Sciatic nerve (tissue), 2 donors: ENCODE measurements at regions of chr2 and their contacts with region 1.

Region 1: DNA sequence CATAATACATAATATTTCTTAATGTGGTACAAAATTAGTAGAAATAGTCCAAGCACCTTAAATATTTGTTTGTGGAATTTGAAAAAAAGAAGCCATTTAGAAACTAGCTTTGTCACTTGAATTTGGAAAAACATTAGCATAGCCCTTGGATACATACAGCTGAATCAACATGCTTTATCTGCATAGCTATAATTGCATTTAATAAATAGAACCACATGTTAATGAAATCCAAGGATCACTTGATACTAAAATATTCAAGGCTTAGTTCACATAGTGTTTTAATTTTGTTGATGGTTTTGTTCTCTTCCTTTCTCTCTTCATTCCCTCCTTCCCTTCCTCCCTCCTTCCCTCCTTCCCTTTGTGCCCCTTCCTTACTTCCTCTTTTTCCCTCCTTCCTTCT is 169.4 kb upstream of the NRXN1 start:
- DNase-seq: no peak
- ATAC-seq: no peak

Region 2: GRCh38 chr2:52608030-52608429 is 1406.7 kb after region 1 on chr2:
- intact Hi-C with region 1: loop called (anchors 5 kb)
- DNase-seq: no peak
- ATAC-seq: no peak